H1 (cell line): ENCODE measurements at regions of chr4 and their contacts with region 1.

Region 1: GRCh38 chr4:87985097-87985886 is 9.8 kb downstream of the SPP1 start:
- DNase-seq: peak in 1 of 2 experiments; percentile 74
- H3K4me3 ChIP-seq: no peak overlapping the region
- H3K27ac ChIP-seq: no peak overlapping the region
- H3K4me1 ChIP-seq: peaks cover 0 to 5% (median under 1%) of the 10 kb centered on the region in 4 experiments; a peak in 3 of 7 replicates
- H3K27me3 ChIP-seq: no peaks in the 10 kb centered on the region
- CTCF ChIP-seq: peak; percentile 84 to 97 (median 93)
- EP300 ChIP-seq: no peak
- POLR2A ChIP-seq: no peak
- RAD21 ChIP-seq: peak; percentile 88 to 93

Region 2: DNA sequence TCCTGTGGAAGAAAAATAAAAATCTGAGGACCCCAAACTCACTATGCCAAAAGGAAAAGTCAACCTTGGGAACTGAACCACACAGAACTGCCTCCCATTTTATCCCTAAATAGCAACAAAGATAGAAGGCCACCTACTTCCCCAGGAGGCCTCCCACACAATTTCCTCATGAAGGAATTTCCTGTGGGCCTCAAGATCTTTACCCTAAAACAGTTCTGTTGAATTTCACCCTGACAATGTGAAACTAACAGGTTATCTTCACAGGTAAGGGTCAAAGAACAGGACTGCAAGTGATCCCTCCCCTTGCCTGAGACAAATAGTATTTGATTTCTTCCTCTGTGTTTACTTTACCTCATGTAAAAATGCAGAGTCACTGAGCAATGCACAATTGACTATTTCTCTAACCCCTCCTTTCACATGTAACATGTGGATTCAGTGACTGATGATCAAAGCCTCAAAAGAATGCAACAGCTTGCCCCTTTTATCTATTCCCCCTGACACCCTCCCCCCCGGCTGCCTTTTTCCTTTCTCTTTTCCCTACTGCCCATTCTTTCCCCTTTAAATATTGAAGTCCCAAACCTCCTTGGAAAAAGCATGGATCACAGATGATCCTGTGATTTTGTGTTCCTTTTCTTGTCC is 119.2 kb before region 1 on chr4:
- CTCF ChIA-PET with region 1: interaction called, 10 read pairs
- POLR2A ChIA-PET with region 1: no interaction called
- DNase-seq: peak in 1 of 2 experiments; percentile 47
- H3K4me3 ChIP-seq: peak overlapping the region in 3 of 4 experiments; percentile 15 to 55 (median 15); a peak in 3 of 8 replicates
- H3K27ac ChIP-seq: peak overlapping the region; percentile 59; the same call in 1 of the 2 replicates
- H3K4me1 ChIP-seq: peaks cover 0 to 14% (median 7%) of the 10 kb centered on the region in 4 experiments; a peak in 3 of 7 replicates
- H3K27me3 ChIP-seq: no peaks in the 10 kb centered on the region
- CTCF ChIP-seq: no peak
- EP300 ChIP-seq: no peak; a peak in 1 of 3 replicates
- POLR2A ChIP-seq: peak; percentile 45 to 60; a peak in 2 of 3 replicates
- RAD21 ChIP-seq: no peak

Region 3: DNA sequence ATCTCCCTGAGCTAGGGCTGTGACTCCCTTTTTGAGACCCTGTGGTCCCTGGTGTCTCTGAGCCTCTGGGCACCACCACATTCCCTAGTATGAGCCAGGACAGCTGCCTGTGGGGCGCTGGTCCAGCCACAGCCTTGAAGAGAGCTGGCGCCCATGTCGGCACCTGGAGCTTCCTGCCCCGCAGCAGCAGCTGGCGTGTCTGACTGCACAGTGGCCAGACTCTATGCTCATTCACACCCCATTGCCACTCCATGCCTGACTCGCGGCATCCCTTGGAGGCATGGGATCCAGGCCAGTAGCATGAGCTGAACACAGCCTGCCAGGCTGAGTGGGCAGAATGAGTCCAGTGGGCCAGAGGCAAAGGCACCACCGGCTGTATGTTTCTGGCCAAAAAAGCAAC is 18.1 kb before region 1 on chr4:
- CTCF ChIA-PET with region 1: interaction called, 10 read pairs
- POLR2A ChIA-PET with region 1: interaction called, 3 read pairs
- DNase-seq: no peak
- H3K4me3 ChIP-seq: no peak overlapping the region
- H3K27ac ChIP-seq: no peak overlapping the region
- H3K4me1 ChIP-seq: peaks cover 0 to 4% (median 2%) of the 10 kb centered on the region in 4 experiments; a peak in 2 of 7 replicates
- H3K27me3 ChIP-seq: no peaks in the 10 kb centered on the region
- CTCF ChIP-seq: no peak
- EP300 ChIP-seq: no peak
- POLR2A ChIP-seq: no peak
- RAD21 ChIP-seq: no peak